Psoas muscle (tissue), 8 donors: ENCODE measurements at regions of chrX and their contacts with region 1.

Region 1: GRCh38 chrX:129726307-129727111 is 12.3 kb upstream of the XPNPEP2 start:
- DNase-seq: peak; percentile 56 to 73
- ATAC-seq: peak; percentile 76 to 86 (median 82)
- H3K4me3 ChIP-seq: no peak overlapping the region
- H3K27ac ChIP-seq: no peak overlapping the region
- H3K4me1 ChIP-seq: no peaks in the 10 kb centered on the region
- H3K27me3 ChIP-seq: no peaks in the 10 kb centered on the region
- CTCF ChIP-seq: peak; percentile 70

Region 2: DNA sequence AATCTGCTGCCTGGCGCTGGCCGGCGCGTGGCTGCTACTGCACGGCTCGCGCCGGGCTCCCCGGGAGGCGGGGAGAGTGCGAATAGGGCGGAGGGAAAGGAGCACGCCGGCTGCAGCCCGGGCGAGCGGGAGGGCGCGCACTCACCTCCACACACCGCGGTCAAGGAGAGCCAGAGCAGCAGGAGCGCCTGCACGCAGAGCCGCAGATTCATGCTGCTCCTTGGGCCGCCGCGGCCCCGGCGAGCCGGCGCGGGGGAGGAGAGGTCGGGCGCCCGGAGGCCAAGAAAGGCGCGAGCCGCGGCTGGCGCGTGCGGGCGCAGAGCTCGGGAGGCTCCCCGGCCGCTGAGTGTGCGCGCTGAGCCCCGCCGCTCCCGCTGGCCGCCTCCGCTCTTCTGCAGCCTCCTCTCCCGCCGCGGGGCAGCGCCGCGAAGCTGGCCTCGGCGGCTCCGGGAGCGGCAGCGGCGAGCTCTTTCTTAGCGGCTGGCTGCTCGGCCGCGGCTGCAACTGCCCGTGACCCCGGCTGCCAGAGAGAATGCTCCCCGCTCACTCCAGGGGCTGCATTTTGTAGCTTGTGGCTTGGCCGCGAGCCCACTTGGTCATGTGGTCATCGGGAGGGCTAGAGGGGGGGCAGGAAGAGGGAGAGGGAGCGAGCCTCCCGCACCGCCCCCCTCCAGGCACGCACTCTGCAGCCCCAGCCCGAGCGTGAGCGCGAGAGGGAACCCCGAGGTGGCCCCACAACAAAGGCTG is 71.9 kb before region 1 on chrX and contains the start of gene APLN:
- intact Hi-C with region 1: loop called in 1 of 2 experiments (anchors 5 kb)
- DNase-seq: peak; percentile 68 to 69
- ATAC-seq: peak; percentile 46 to 70 (median 60)
- H3K4me3 ChIP-seq: peak within 1 kb of the TSS; percentile 63
- H3K27ac ChIP-seq: no peak within 1 kb of the TSS
- H3K4me1 ChIP-seq: no peaks in the 10 kb centered on the region
- H3K27me3 ChIP-seq: no peaks in the 10 kb centered on the region
- CTCF ChIP-seq: no peak
- total RNA-seq, gene APLN: 0.86 to 4.1 (median 1.6) TPM

Region 3: GRCh38 chrX:129908636-129909035 is 182.1 kb after region 1 on chrX:
- intact Hi-C with region 1: no loop called
- DNase-seq: no peak
- ATAC-seq: no peak
- H3K4me3 ChIP-seq: no peak overlapping the region
- H3K27ac ChIP-seq: no peak overlapping the region
- H3K4me1 ChIP-seq: no peaks in the 10 kb centered on the region
- H3K27me3 ChIP-seq: no peaks in the 10 kb centered on the region
- CTCF ChIP-seq: no peak